ENCODE measurements at regions of chr2 and their contacts with region 1.

Region 1: DNA sequence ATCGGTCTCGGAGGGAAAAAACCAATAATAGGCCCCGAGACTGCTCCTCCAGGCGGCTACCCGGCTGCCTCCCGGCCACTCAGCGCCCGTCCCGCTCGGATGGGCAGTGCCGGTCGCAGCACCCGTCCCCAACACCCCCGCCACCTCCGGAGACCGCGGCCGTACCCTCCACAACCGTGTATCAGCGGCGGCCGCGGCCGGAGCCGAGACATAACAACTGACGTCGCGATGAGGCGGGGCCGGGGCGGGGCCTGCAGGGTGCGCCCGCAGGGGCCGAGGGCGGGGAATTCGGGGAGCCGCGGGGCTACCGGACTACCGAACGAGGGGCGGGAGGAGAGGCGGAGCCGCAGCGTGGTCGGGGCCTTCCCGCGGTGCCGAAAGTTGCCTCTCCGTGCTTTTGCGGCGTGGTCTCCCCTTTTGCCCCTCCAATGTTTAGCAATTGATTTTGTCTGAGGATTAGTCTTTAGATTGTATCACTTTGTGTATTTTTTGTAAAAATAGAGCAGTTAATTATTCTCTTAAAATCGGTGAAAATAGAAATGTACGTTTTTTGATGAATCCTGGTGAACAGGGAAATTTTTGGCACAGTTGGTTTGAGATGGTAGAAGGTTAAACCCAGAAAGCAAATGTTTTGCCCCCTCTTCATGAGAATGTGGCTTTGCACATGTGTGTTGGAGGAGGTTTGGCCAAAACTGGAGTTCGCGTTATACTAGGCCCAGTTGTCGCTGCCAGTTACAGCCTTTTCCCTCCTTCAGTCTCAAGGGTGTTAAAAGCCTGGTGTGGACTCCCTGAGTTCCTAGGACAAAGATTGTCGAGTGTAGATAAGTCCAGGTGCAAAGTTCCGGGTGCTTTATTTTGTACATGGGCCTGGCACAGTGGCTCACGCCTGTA is at the start of gene RNF103:
- DNase-seq: peak; percentile 95
- ATAC-seq: peak; percentile 82
- H3K4me3 Mint-ChIP-seq: peak within 1 kb of the TSS; percentile 93
- H3K27ac Mint-ChIP-seq: peak within 1 kb of the TSS; percentile 98
- H3K4me1 Mint-ChIP-seq: peaks cover 26% of the 10 kb centered on the region
- H3K27me3 Mint-ChIP-seq: peaks cover 13% of the 10 kb centered on the region
- total RNA-seq, gene RNF103: 20.1 to 20.9 TPM

Region 2: GRCh38 chr2:86562922-86563649 is 60.8 kb before region 1 on chr2 and contains the start of gene CHMP3:
- POLR2A ChIA-PET with region 1: interaction called, 12 read pairs
- DNase-seq: peak; percentile 96
- ATAC-seq: peak; percentile 94
- H3K4me3 Mint-ChIP-seq: peak within 1 kb of the TSS; percentile 95
- H3K27ac Mint-ChIP-seq: peak within 1 kb of the TSS; percentile 99
- H3K4me1 Mint-ChIP-seq: peaks cover 22% of the 10 kb centered on the region
- H3K27me3 Mint-ChIP-seq: no peaks in the 10 kb centered on the region
- total RNA-seq, gene CHMP3: 48.9 to 49.5 TPM

Region 3: DNA sequence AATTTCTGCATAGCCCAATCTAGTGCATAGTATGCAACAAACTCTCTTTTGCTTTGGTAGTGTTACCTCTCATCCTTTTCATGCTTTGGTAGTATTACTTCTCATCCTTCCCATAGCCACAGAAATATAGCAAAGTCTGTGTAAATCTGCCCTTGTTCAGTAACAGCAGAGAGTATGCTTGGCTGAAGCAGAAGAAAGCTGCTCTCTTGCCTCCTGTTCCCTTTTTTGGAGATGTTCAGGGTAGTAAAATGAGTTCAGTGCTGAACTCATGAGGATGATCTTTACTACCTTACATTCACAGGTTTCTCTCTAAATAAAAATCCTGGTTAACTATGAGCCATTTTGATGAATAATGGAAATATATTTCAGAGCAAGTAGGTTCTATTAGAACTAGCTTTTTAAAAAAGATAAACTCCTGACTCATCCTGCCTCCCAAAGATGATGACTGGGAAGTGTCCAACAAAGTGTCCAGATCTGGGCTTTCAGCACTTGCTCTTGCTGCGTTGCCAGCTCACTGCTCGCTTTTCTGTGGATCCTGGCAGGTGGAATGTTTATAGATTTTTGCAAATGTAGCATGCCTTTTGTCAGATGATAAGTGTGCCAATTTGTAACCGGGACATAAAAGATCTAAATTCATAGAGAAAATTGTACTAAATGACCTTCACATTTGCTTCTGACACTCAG is 31.2 kb before region 1 on chr2:
- POLR2A ChIA-PET with region 1: no interaction called
- DNase-seq: no peak
- ATAC-seq: no peak
- H3K4me3 Mint-ChIP-seq: no peak overlapping the region
- H3K27ac Mint-ChIP-seq: no peak overlapping the region
- H3K4me1 Mint-ChIP-seq: no peaks in the 10 kb centered on the region
- H3K27me3 Mint-ChIP-seq: peaks cover 15% of the 10 kb centered on the region

Region 4: DNA sequence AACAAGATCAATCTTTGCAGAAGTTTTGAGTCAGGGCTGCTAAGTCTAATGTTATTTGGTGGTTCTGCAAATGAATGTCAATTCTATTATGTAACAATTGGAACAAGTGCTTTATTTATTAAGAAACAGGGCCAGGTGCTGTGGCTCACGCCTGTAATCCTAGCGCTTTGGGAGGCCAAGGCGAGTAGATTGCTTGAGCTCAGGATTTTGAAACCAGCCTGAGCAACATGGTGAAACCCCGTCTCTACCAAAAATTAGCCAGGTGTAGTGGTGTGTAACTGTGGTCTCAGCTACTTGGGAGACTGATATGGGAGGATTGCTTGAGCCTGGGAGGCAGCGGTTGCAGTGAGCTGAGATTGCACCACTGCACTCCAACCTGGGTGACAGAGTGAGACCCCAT is 12.9 kb after region 1 on chr2:
- POLR2A ChIA-PET with region 1: no interaction called
- DNase-seq: no peak
- ATAC-seq: no peak
- H3K4me3 Mint-ChIP-seq: no peak overlapping the region
- H3K27ac Mint-ChIP-seq: peak overlapping the region; percentile 40
- H3K4me1 Mint-ChIP-seq: no peaks in the 10 kb centered on the region
- H3K27me3 Mint-ChIP-seq: peaks cover 6% of the 10 kb centered on the region

Region 5: GRCh38 chr2:86646865-86647264 is 23.0 kb after region 1 on chr2:
- POLR2A ChIA-PET with region 1: no interaction called
- DNase-seq: no peak
- ATAC-seq: no peak
- H3K4me3 Mint-ChIP-seq: no peak overlapping the region
- H3K27ac Mint-ChIP-seq: no peak overlapping the region
- H3K4me1 Mint-ChIP-seq: no peaks in the 10 kb centered on the region
- H3K27me3 Mint-ChIP-seq: no peaks in the 10 kb centered on the region

Measured in activated naive CD8-positive, alpha-beta T cell treated with anti-CD3 and anti-CD28 coated beads, Interleukin-2, amount 10 ng/mL, durations not matched to agents 7 days and 5 days (primary cell).